Naive thymus-derived CD4-positive, alpha-beta T cell (primary cell): ENCODE measurements at regions of chr9 and their contacts with region 1.

Region 1: GRCh38 chr9:128902351-128903078 is 18.3 kb upstream of the PHYHD1 start:
- DNase-seq: peak; percentile 61 to 93 (median 90)
- ATAC-seq: peak; percentile 95
- H3K4me3 ChIP-seq: peak overlapping the region; percentile 55
- H3K4me3 Mint-ChIP-seq: peak overlapping the region; percentile 76 to 87 (median 84)
- H3K27ac ChIP-seq: peak overlapping the region; percentile 89
- H3K27ac Mint-ChIP-seq: peak overlapping the region; percentile 85 to 98 (median 96)
- H3K4me1 ChIP-seq: peaks cover 64 to 65% of the 10 kb centered on the region in 2 donors
- H3K4me1 Mint-ChIP-seq: peaks cover 32 to 84% (median 73%) of the 10 kb centered on the region in 7 donors
- H3K27me3 ChIP-seq: no peaks in the 10 kb centered on the region
- H3K27me3 Mint-ChIP-seq: no peaks in the 10 kb centered on the region

Region 2: GRCh38 chr9:128191406-128192046 is 711.0 kb before region 1 on chr9 and contains the start of gene CIZ1:
- CTCF ChIA-PET with region 1: no interaction called
- POLR2A ChIA-PET with region 1: no interaction called
- intact Hi-C with region 1: no loop called
- DNase-seq: peak; percentile 51 to 86 (median 69)
- ATAC-seq: peak; percentile 95
- H3K4me3 ChIP-seq: peak within 1 kb of the TSS; percentile 76
- H3K4me3 Mint-ChIP-seq: peak within 1 kb of the TSS; percentile 92 to 99 (median 96)
- H3K27ac ChIP-seq: peak within 1 kb of the TSS; percentile 89
- H3K27ac Mint-ChIP-seq: peak within 1 kb of the TSS; percentile 84 to 93 (median 90)
- H3K4me1 ChIP-seq: peaks cover 12 to 16% of the 10 kb centered on the region in 2 donors
- H3K4me1 Mint-ChIP-seq: peaks cover 13 to 39% (median 31%) of the 10 kb centered on the region in 7 donors
- H3K27me3 ChIP-seq: no peaks in the 10 kb centered on the region
- H3K27me3 Mint-ChIP-seq: peaks cover 0 to 13% (median 0%) of the 10 kb centered on the region in 5 donors
- total RNA-seq, gene CIZ1: 110 to 163 (median 142) TPM

Region 3: DNA sequence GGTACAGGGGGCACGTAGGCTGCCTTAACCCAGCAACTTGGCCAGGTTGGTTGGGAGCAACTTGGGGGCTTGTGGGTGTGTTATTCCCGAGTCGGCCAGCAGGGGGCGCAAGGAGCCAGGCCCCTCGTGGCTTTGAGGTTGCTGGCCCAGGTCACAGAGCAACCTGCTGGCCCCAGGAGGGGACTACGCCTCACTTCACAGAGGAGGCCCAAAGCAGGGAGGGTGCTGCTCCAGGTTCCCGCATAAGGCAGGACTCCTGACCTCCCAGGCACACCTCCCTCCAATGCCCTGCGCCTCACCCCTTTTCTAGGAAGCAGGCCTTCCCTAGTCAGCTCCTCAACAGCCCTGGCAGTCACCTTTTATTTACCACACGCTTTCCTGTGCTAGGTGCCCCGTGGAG is 38.9 kb before region 1 on chr9:
- CTCF ChIA-PET with region 1: interaction called, 4 read pairs
- POLR2A ChIA-PET with region 1: interaction called, 3 read pairs
- intact Hi-C with region 1: loop called in 1 of 2 experiments (anchors 1 kb)
- DNase-seq: peak; percentile 69 to 89 (median 79)
- ATAC-seq: peak; percentile 99
- H3K4me3 ChIP-seq: no peak overlapping the region
- H3K4me3 Mint-ChIP-seq: no peak overlapping the region
- H3K27ac ChIP-seq: no peak overlapping the region
- H3K27ac Mint-ChIP-seq: peak overlapping the region; percentile 11 to 78 (median 55)
- H3K4me1 ChIP-seq: peaks cover 3 to 7% of the 10 kb centered on the region in 2 donors
- H3K4me1 Mint-ChIP-seq: peaks cover 0 to 10% (median 6%) of the 10 kb centered on the region in 7 donors
- H3K27me3 ChIP-seq: no peaks in the 10 kb centered on the region
- H3K27me3 Mint-ChIP-seq: no peaks in the 10 kb centered on the region

Region 4: DNA sequence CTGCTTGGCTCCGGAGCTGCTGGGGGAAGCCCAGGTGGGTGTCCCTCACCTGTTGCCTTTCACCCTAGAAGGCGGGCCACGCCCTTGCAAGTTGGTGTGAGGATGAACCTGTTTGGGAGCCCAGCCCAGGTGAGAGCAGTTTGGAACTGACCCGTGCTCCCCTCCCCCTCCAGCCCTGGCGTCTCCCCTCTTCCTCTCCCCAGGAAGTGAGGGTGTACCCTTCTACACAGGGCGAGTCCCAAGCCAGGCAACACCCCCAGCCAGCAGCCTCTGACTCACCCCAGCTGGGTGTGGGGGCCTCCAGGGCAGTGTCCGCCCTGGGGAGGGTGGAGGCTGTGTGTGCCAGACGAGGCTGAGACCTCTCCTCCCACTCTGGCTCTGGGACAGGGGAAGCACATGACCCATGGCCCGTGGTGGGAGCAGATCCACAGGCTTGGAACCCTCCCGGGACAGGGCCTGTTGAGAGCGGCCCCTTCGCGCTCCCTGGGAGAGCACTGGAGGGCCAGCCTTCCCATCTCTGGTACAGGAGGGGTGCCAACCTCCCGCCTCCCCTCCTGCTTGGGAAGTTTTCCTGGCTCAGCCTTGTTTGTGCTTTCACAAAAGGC is 10.1 kb before region 1 on chr9:
- CTCF ChIA-PET with region 1: no interaction called
- POLR2A ChIA-PET with region 1: interaction called, 48 read pairs
- intact Hi-C with region 1: loop called in 1 of 2 experiments (anchors 1 kb)
- DNase-seq: no peak
- ATAC-seq: peak; percentile 70
- H3K4me3 ChIP-seq: no peak overlapping the region
- H3K4me3 Mint-ChIP-seq: peak overlapping the region in 4 of 10 donors; percentile 29 to 77 (median 66)
- H3K27ac ChIP-seq: peak overlapping the region; percentile 62
- H3K27ac Mint-ChIP-seq: peak overlapping the region; percentile 54 to 97 (median 93)
- H3K4me1 ChIP-seq: peaks cover 16 to 46% of the 10 kb centered on the region in 2 donors
- H3K4me1 Mint-ChIP-seq: peaks cover 38 to 79% (median 65%) of the 10 kb centered on the region in 7 donors
- H3K27me3 ChIP-seq: no peaks in the 10 kb centered on the region
- H3K27me3 Mint-ChIP-seq: no peaks in the 10 kb centered on the region

Region 5: GRCh38 chr9:128921881-128922763 is 19.6 kb after region 1 on chr9:
- CTCF ChIA-PET with region 1: interaction called, 4 read pairs
- POLR2A ChIA-PET with region 1: interaction called, 14 read pairs
- intact Hi-C with region 1: no loop called
- DNase-seq: peak in 1 of 9 donors; percentile 15
- ATAC-seq: peak; percentile 62
- H3K4me3 ChIP-seq: peak overlapping the region; percentile 35
- H3K4me3 Mint-ChIP-seq: peak overlapping the region in 9 of 10 donors; percentile 32 to 77 (median 64)
- H3K27ac ChIP-seq: peak overlapping the region; percentile 47
- H3K27ac Mint-ChIP-seq: peak overlapping the region in 6 of 9 donors; percentile 14 to 83 (median 62)
- H3K4me1 ChIP-seq: peaks cover 0 to 6% of the 10 kb centered on the region in 2 donors
- H3K4me1 Mint-ChIP-seq: peaks cover 10 to 27% (median 15%) of the 10 kb centered on the region in 7 donors
- H3K27me3 ChIP-seq: no peaks in the 10 kb centered on the region
- H3K27me3 Mint-ChIP-seq: peaks cover 0 to 3% (median 0%) of the 10 kb centered on the region in 5 donors

Region 6: DNA sequence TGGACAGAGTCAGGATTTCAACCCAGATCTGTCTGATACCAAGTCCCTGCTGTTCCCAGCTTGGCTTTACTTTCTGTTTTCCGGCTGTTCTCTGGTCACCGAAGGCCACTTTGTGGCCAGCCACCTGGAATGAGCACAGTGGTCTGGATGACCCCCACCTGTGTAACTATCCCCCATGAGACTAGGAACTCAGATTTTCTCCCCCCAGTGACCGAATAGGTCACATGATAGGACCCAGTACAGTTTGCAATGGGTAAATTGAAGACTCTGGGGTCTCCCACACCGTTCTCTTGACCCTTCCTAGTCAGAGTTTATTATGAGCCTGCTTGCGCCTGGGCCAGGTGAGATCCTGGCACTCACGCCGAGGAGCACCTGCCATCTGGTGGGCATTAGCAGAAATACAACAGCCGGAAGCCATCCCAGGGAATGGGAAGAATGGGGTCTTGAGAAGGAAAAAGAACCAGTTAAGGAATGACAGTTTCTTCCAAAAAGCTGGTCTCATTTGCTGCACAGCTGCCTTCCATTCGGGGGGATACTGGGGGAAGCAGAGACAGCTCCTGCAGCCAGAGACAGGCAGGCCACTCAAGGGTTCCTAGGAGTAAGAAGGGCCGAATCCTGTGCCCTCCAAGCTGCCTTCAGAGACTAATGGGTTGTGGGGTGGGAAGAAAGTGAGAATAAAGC is 25.4 kb after region 1 on chr9:
- CTCF ChIA-PET with region 1: interaction called, 6 read pairs
- POLR2A ChIA-PET with region 1: interaction called, 14 read pairs
- intact Hi-C with region 1: loop called in 1 of 2 experiments (anchors 1 kb)
- DNase-seq: peak; percentile 24 to 69 (median 46)
- ATAC-seq: peak; percentile 77
- H3K4me3 ChIP-seq: no peak overlapping the region
- H3K4me3 Mint-ChIP-seq: peak overlapping the region in 3 of 10 donors; percentile 11 to 47 (median 39)
- H3K27ac ChIP-seq: no peak overlapping the region
- H3K27ac Mint-ChIP-seq: peak overlapping the region in 8 of 9 donors; percentile 1 to 76 (median 50)
- H3K4me1 ChIP-seq: peaks cover 3 to 6% of the 10 kb centered on the region in 2 donors
- H3K4me1 Mint-ChIP-seq: peaks cover 12 to 22% (median 19%) of the 10 kb centered on the region in 7 donors
- H3K27me3 ChIP-seq: no peaks in the 10 kb centered on the region
- H3K27me3 Mint-ChIP-seq: peaks cover 0 to 3% (median 0%) of the 10 kb centered on the region in 5 donors

Region 7: GRCh38 chr9:129036241-129036922 is 133.9 kb after region 1 on chr9 and contains the start of gene MIGA2:
- CTCF ChIA-PET with region 1: no interaction called
- POLR2A ChIA-PET with region 1: interaction called, 3 read pairs
- intact Hi-C with region 1: loop called (anchors 1 to 5 kb)
- DNase-seq: peak; percentile 78 to 93 (median 90)
- ATAC-seq: peak; percentile 99
- H3K4me3 ChIP-seq: peak within 1 kb of the TSS; percentile 87
- H3K4me3 Mint-ChIP-seq: peak within 1 kb of the TSS; percentile 90 to 99 (median 94)
- H3K27ac ChIP-seq: peak within 1 kb of the TSS; percentile 72
- H3K27ac Mint-ChIP-seq: peak within 1 kb of the TSS; percentile 56 to 93 (median 87)
- H3K4me1 ChIP-seq: peaks cover 13 to 17% of the 10 kb centered on the region in 2 donors
- H3K4me1 Mint-ChIP-seq: peaks cover 22 to 41% (median 37%) of the 10 kb centered on the region in 7 donors
- H3K27me3 ChIP-seq: no peaks in the 10 kb centered on the region
- H3K27me3 Mint-ChIP-seq: no peaks in the 10 kb centered on the region
- total RNA-seq, gene MIGA2: 50.0 to 73.4 (median 60.7) TPM